Heart left ventricle (tissue), 16 donors: ENCODE measurements at regions of chr7 and their contacts with region 1.

Region 1: DNA sequence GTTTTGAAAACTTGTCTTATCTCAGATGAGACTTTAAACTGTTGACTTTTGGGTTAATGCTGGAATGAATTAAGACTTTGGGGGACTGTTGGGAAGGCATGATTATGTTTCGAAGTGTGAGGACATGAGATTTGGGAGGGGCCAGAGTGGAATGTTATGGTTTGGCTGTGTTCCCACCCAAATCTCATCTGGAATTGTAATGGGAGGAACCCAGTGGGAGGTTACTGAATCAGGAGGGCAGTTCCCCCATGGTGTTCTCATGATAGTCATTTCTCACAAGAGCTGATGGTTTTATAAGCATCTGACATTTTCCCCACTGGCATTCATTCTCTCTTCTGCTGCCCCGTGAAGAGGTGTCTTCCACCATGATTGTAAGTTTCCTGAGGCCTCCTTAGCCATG is 13.8 kb upstream of the POT1 start:
- DNase-seq: no peak
- ATAC-seq: no peak
- H3K4me3 ChIP-seq: no peak overlapping the region
- H3K27ac ChIP-seq: no peak overlapping the region
- H3K4me1 ChIP-seq: no peaks in the 10 kb centered on the region
- H3K27me3 ChIP-seq: no peaks in the 10 kb centered on the region
- CTCF ChIP-seq: no peak
- POLR2A ChIP-seq: no peak

Region 2: DNA sequence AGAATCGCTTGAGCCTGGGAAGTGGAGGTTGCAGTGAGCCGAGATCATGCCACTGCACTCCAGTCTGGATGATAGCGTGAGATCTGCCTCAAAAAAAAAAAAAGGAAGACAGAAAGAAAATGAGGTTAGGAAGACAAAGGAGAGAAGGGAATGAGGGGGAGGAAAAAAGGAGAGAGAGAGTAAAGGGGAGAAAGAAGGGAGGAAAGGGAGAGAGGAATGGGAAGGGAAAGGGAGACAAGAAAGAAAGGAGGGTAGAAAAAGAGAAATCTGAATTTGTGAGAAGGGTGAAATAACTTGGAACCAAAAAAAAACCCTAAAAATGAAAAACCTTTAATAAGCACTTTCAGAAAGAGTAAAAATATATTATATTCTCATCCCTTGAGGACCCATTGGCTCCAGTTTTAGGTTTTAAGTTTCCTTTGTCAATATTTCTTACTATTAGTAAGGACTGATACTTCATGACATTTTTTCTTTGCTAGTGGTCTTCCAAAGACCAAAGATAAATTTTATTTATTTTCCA is 68.8 kb before region 1 on chr7:
- intact Hi-C with region 1: loop called in 1 of 10 experiments (anchors 2 kb)
- DNase-seq: no peak
- ATAC-seq: no peak
- H3K4me3 ChIP-seq: no peak overlapping the region
- H3K27ac ChIP-seq: no peak overlapping the region
- H3K4me1 ChIP-seq: no peaks in the 10 kb centered on the region
- H3K27me3 ChIP-seq: no peaks in the 10 kb centered on the region
- CTCF ChIP-seq: no peak
- POLR2A ChIP-seq: no peak

Region 3: DNA sequence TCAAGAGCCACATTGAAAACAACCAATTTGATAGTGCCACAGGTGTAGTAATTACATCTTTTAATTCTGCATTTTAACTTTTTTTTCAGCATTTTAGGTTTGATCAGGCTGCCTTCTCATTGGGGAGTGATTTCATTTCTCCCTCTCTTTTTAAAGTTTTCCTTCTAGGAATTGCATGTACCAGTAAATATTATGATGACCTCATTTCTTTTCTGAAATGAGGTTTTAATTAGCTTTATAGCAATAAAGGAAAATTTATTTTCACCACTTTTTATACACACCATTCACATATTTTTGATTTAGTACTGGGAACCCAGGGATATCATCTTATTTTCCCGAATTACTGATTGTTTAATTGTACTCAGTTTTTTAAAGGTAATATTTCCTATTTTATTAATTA is 63.9 kb after region 1 on chr7:
- intact Hi-C with region 1: no loop called
- DNase-seq: no peak
- ATAC-seq: no peak
- H3K4me3 ChIP-seq: no peak overlapping the region
- H3K27ac ChIP-seq: no peak overlapping the region
- H3K4me1 ChIP-seq: no peaks in the 10 kb centered on the region
- H3K27me3 ChIP-seq: no peaks in the 10 kb centered on the region
- CTCF ChIP-seq: no peak
- POLR2A ChIP-seq: no peak